Right cardiac atrium (tissue), 5 donors: ENCODE measurements at regions of chr17 and their contacts with region 1.

Region 1: GRCh38 chr17:19672009-19672750 is 23.6 kb downstream of the ALDH3A2 start:
- DNase-seq: peak; percentile 57 to 85 (median 60)
- ATAC-seq: peak; percentile 91
- H3K4me3 ChIP-seq: no peak overlapping the region
- H3K27ac ChIP-seq: peak overlapping the region; percentile 11
- H3K4me1 ChIP-seq: no peaks in the 10 kb centered on the region
- H3K27me3 ChIP-seq: no peaks in the 10 kb centered on the region

Region 2: DNA sequence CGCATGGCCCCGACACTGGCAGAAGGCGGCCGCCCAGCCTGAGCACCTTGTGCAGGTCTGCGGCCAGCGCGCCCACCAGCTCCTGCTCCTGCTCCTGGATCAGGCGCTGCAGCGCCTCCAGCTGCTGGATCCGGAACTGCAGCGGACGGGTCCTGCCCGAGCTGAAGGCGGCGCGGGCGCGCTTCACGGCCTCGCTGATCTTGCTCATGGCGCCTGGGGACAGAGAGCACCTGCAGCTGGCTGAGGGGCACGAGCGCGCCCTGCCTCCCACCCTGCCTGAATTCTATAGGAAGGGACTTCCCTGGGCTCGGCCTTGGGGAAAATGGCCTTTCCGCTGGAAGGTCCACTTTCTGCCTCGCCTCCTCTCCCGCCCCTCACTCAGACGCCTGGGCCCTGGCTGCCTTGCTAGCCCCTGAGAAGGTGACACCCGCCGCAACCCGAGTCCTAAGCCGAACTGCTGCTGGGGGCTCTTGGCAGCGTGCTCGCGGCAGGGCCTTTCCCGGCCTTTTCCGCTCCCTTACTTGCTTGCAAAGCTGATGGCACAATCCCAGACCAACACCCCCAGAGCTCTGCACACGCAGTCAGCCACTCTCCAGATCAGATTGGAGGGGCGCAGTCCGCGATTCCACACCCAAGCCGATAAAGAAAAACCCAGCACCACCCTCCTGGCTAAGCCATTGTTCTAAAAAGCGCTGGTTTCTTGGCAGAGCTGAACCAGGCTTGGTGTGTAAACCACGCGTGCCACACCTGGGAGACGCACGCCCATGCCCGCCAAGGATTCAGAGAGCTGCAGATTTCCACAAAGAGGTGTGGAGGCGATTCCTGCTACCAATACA is 73.0 kb after region 1 on chr17:
- intact Hi-C with region 1: loop called in 1 of 4 experiments (anchors 10 kb)
- DNase-seq: peak; percentile 90 to 97 (median 97)
- ATAC-seq: peak; percentile 88 to 89
- H3K4me3 ChIP-seq: peak overlapping the region; percentile 56
- H3K27ac ChIP-seq: no peak overlapping the region
- H3K4me1 ChIP-seq: no peaks in the 10 kb centered on the region
- H3K27me3 ChIP-seq: no peaks in the 10 kb centered on the region